ENCODE measurements at regions of chr4 and their contacts with region 1.

Region 1: DNA sequence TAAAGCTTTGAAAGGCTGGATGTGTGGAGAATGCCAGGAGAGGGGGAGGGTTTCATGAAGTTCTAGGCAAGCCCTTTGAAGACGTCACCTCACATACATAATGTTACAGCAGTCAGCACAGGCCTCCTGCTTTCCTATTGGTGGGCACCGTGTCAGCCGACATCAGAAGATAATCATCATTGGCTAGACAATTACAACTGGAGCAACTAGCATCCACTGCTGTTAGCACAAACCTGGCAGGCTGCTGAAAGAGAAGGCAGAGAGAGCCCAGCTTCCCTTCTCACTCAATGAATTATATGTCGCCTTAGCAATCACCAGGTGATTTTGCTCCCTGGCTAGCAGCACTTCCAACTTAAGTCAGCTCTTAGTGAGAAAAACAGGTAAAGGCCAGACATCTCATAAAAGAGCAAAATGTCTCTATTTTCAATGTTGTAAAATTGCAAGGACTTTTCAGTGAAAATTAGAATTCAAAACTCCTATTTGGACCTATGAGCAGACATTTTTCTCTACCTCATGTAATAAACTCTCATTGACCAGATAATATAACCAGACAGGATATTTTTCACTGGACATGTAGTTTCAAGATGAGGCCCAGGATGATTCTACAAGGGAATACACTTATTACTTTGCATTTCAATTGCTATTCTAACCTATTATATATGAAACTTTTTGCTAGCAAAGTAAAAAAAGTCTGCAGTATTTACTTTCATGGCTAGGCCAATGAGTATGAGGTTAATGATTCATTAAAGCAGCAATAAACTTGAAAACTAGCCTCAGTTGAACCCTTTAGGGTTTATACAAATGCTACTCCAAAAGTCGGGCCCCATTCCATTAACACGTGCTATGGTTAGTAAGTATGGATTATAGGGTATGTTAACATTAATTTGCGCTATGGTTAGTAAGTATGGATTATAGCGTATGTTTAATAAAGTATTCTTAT is 4.3 kb downstream of the ELOVL6 start:
- DNase-seq: peak; percentile 39 to 88 (median 78)
- ATAC-seq: peak; percentile 82 to 87
- H3K4me3 Mint-ChIP-seq: peak overlapping the region in 7 of 10 donors; percentile 5 to 79 (median 44)
- H3K27ac Mint-ChIP-seq: peak overlapping the region; percentile 55 to 94 (median 86)
- H3K4me1 Mint-ChIP-seq: peaks cover 19 to 43% (median 28%) of the 10 kb centered on the region in 4 donors
- H3K27me3 Mint-ChIP-seq: no peaks in the 10 kb centered on the region

Region 2: GRCh38 chr4:110139815-110140214 is 54.3 kb before region 1 on chr4:
- POLR2A ChIA-PET with region 1: no interaction called
- DNase-seq: no peak
- ATAC-seq: no peak
- H3K4me3 Mint-ChIP-seq: no peak overlapping the region
- H3K27ac Mint-ChIP-seq: no peak overlapping the region
- H3K4me1 Mint-ChIP-seq: peaks cover 0 to 5% (median under 1%) of the 10 kb centered on the region in 4 donors
- H3K27me3 Mint-ChIP-seq: no peaks in the 10 kb centered on the region

Region 3: DNA sequence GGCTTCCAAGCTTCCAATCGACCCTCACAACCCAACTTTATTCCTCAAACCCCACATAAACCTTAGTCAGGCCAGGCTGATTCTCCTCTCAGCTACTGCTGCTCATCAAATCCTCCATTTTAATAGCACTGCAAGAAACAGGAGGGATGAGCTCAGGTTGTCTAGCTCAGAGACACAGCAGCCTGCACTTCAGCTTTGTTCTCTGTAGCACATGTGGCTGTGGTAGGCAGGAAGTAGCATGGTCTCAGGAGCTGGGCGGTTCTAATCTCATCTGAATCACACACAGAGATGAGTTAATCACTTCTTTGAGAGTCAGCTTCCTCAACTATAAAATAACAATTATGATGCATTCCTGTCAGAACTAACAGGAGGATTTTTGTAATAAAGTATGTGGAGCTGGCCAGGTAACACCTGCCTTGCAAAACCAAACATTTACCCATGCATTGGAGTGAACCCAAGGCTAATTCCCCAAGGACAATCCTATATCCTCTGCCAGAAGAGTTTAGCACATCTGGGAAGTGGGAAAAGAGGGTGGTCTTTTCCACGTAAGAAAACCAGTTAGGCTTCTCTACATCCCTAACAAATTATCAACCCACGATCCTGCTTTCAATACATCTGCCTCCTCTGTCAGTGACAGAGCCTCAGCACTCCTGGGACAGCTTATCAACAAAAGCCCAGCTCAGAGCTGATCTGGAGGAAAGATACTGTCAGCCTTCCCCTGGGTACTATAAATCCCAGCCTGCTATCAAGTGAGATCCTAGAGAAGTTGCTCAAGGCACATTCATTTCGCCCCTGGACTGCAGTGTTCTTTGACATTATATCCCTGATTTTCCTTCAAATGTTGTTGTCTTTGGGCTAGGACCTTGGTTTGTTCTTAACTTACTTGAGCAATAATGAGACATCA is 28.5 kb before region 1 on chr4:
- POLR2A ChIA-PET with region 1: interaction called, 17 read pairs
- DNase-seq: peak; percentile 6 to 77 (median 54)
- ATAC-seq: peak; percentile 100
- H3K4me3 Mint-ChIP-seq: peak overlapping the region; percentile 4 to 76 (median 69)
- H3K27ac Mint-ChIP-seq: peak overlapping the region; percentile 81 to 99 (median 95)
- H3K4me1 Mint-ChIP-seq: peaks cover 16 to 40% (median 37%) of the 10 kb centered on the region in 4 donors
- H3K27me3 Mint-ChIP-seq: no peaks in the 10 kb centered on the region

Region 4: DNA sequence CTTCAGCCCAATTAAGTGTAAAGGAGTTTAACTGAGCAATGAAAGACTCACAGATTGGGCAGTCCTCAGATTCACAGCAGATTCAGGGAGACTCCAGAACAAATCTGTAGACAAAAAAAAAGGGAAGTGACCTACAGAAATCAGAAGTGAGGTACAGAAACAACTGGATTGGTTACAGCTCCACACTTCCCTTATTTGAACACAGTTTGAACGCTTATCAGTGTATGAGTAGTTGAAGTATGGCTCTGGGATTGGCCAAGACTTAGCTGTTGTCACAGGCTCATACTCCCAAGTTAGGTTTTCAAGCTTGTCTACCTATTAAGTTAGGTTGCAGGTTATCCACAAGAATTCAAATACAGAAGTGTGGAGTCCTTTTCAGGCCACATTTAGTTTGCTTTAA is 116.7 kb after region 1 on chr4:
- POLR2A ChIA-PET with region 1: no interaction called
- DNase-seq: no peak
- ATAC-seq: no peak
- H3K4me3 Mint-ChIP-seq: no peak overlapping the region
- H3K27ac Mint-ChIP-seq: no peak overlapping the region
- H3K4me1 Mint-ChIP-seq: no peaks in the 10 kb centered on the region
- H3K27me3 Mint-ChIP-seq: peaks cover 5 to 9% (median 7%) of the 10 kb centered on the region in 5 donors